Common myeloid progenitor, CD34-positive (primary cell): ENCODE measurements at regions of chr2 and their contacts with region 1.

Region 1: GRCh38 chr2:30324245-30324908 is 93.0 kb downstream of the LBH start:
- DNase-seq: no peak
- H3K4me3 ChIP-seq: no peak overlapping the region
- H3K27ac ChIP-seq: no peak overlapping the region
- H3K4me1 ChIP-seq: no peaks in the 10 kb centered on the region
- H3K27me3 ChIP-seq: no peaks in the 10 kb centered on the region

Region 2: GRCh38 chr2:30078521-30078920 is 245.9 kb before region 1 on chr2:
- CTCF ChIA-PET with region 1: no interaction called
- POLR2A ChIA-PET with region 1: no interaction called
- DNase-seq: no peak
- H3K4me3 ChIP-seq: no peak overlapping the region
- H3K27ac ChIP-seq: no peak overlapping the region
- H3K4me1 ChIP-seq: no peaks in the 10 kb centered on the region
- H3K27me3 ChIP-seq: peaks cover 0 to 5% (median 0%) of the 10 kb centered on the region in 5 experiments

Region 3: GRCh38 chr2:30293303-30293921 is 31.0 kb before region 1 on chr2:
- CTCF ChIA-PET with region 1: no interaction called
- POLR2A ChIA-PET with region 1: no interaction called
- DNase-seq: peak; percentile 44 to 85 (median 79)
- H3K4me3 ChIP-seq: no peak overlapping the region
- H3K27ac ChIP-seq: no peak overlapping the region
- H3K4me1 ChIP-seq: peaks cover 11 to 27% (median 19%) of the 10 kb centered on the region in 4 experiments
- H3K27me3 ChIP-seq: no peaks in the 10 kb centered on the region

Region 4: DNA sequence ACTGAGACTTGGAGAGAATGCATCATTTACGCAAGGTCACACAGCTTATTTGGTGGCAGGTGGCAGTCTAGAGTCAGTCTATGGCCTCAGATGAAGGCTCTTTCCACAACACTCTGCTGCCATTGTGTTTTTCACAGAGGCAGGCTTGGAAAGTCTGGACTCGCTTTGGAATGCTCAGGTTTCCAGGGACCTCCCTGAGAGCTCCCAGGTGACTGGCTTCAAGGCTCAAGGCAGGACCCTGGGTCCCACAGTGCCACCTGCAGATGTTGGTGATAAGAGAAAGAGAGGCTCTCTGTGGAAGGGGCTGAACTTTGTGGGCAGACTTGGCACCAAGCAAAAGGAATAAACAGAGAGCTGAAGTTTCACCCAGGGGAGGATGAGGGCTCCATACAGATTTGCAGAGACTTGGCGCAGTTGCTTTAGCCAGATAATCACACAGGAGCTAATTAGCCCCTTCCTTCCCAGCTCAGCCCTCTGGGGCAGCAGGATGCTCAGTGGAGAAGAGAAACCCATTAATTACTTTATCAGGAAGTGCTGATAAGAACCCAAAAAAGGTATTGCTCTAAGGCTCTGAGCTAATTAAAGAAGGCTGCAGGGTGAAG is 10.5 kb after region 1 on chr2:
- CTCF ChIA-PET with region 1: interaction called, 11 read pairs
- POLR2A ChIA-PET with region 1: no interaction called
- DNase-seq: peak in 2 of 3 donors; percentile 15 to 26
- H3K4me3 ChIP-seq: no peak overlapping the region
- H3K27ac ChIP-seq: no peak overlapping the region
- H3K4me1 ChIP-seq: peaks cover 6 to 23% (median 20%) of the 10 kb centered on the region in 4 experiments
- H3K27me3 ChIP-seq: no peaks in the 10 kb centered on the region